CD4-positive, alpha-beta memory T cell (primary cell): ENCODE measurements at regions of chr2 and their contacts with region 1.

Region 1: GRCh38 chr2:177332041-177332991 is 60.3 kb upstream of the AGPS start:
- DNase-seq: peak in 4 of 5 donors; percentile 55 to 62 (median 60)
- H3K4me3 ChIP-seq: no peak overlapping the region
- H3K4me3 Mint-ChIP-seq: no peak overlapping the region
- H3K27ac ChIP-seq: no peak overlapping the region
- H3K27ac Mint-ChIP-seq: peak overlapping the region in 4 of 7 donors; percentile 33 to 78 (median 64)
- H3K4me1 ChIP-seq: peaks cover 10% of the 10 kb centered on the region
- H3K4me1 Mint-ChIP-seq: peaks cover 0 to 13% (median 6%) of the 10 kb centered on the region in 4 donors
- H3K27me3 ChIP-seq: no peaks in the 10 kb centered on the region
- H3K27me3 Mint-ChIP-seq: no peaks in the 10 kb centered on the region

Region 2: GRCh38 chr2:176001916-176002687 is 1330.2 kb before region 1 on chr2 and contains the start of gene LNPK:
- CTCF ChIA-PET with region 1: no interaction called
- POLR2A ChIA-PET with region 1: no interaction called
- intact Hi-C with region 1: loop called (anchors 5 kb)
- DNase-seq: peak; percentile 88 to 95 (median 92)
- H3K4me3 ChIP-seq: peak within 1 kb of the TSS; percentile 76 to 77
- H3K4me3 Mint-ChIP-seq: peak within 1 kb of the TSS; percentile 81 to 94 (median 90)
- H3K27ac ChIP-seq: peak within 1 kb of the TSS; percentile 74
- H3K27ac Mint-ChIP-seq: peak within 1 kb of the TSS; percentile 61 to 98 (median 91)
- H3K4me1 ChIP-seq: peaks cover 16% of the 10 kb centered on the region
- H3K4me1 Mint-ChIP-seq: peaks cover 12 to 33% (median 17%) of the 10 kb centered on the region in 4 donors
- H3K27me3 ChIP-seq: no peaks in the 10 kb centered on the region
- H3K27me3 Mint-ChIP-seq: no peaks in the 10 kb centered on the region
- total RNA-seq, gene LNPK: 30.4 to 31.3 TPM

Region 3: DNA sequence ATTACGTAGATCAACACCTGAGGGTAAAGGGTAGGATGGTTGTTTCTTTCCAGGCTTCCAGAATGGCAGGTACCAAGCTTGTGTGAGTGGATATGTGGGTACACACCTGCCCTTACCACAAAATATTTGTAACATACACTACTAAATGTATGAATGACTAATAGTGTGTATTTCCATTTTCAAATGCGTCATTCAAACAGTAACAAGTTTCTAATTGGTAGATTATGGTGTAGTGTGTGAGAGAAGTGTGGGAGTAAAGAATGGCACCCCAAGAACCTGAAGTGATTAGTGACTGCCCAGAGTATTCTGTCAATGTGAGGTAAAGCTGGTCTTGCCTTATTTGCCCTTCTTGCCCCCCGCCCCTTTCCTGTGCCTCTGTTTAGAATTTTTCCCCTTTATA is 81.4 kb after region 1 on chr2:
- CTCF ChIA-PET with region 1: interaction called, 87 read pairs
- POLR2A ChIA-PET with region 1: no interaction called
- intact Hi-C with region 1: loop called (anchors 1 kb)
- DNase-seq: no peak
- H3K4me3 ChIP-seq: no peak overlapping the region
- H3K4me3 Mint-ChIP-seq: no peak overlapping the region
- H3K27ac ChIP-seq: no peak overlapping the region
- H3K27ac Mint-ChIP-seq: peak overlapping the region in 4 of 7 donors; percentile 32 to 66 (median 50)
- H3K4me1 ChIP-seq: peaks cover 5% of the 10 kb centered on the region
- H3K4me1 Mint-ChIP-seq: peaks cover 26 to 32% (median 27%) of the 10 kb centered on the region in 4 donors
- H3K27me3 ChIP-seq: no peaks in the 10 kb centered on the region
- H3K27me3 Mint-ChIP-seq: no peaks in the 10 kb centered on the region

Region 4: DNA sequence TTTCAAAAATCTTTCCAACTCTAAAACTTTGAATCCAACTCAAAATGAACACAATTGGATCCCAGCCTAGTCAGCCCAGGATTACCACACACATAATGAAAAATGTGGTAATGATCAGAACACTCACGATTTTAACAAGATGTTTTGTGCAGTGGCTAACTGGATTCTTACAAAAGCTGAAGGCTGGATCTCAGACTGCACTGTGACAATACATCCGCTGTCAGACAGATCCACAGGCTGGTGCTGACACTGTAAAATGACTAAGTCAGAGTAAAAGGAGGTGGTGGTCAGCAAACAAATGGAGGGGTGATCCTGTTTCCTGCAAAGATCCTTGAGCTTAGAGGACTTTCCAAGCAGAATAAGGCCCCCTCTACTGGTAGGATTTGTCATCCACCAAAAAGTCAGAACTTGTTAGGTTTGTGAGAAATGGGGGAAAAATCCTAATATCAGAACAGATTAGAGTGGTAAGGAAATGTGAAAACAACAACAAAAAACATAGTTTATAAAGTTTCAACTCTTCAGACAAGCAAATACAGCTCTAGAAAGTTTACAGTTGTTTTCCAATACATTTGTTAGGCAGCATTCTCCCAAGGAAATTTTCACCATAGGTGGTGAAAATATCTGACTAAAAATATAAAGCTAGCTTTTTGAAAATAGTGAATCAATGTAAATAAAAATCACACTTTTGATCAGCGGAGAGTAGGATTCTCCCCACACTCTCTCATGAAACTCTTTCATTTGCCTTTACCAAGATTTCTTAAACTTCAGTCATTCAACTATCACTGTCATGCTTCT is 272.2 kb after region 1 on chr2:
- CTCF ChIA-PET with region 1: interaction called, 9 read pairs
- POLR2A ChIA-PET with region 1: no interaction called
- intact Hi-C with region 1: loop called (anchors 1 kb)
- DNase-seq: peak in 2 of 5 donors; percentile 6 to 8
- H3K4me3 ChIP-seq: no peak overlapping the region
- H3K4me3 Mint-ChIP-seq: no peak overlapping the region
- H3K27ac ChIP-seq: no peak overlapping the region
- H3K27ac Mint-ChIP-seq: peak overlapping the region in 1 of 7 donors; percentile 37
- H3K4me1 ChIP-seq: no peaks in the 10 kb centered on the region
- H3K4me1 Mint-ChIP-seq: no peaks in the 10 kb centered on the region
- H3K27me3 ChIP-seq: no peaks in the 10 kb centered on the region
- H3K27me3 Mint-ChIP-seq: peaks cover 9% of the 10 kb centered on the region in 2 donors

Region 5: GRCh38 chr2:177724398-177725287 is 392.3 kb after region 1 on chr2:
- CTCF ChIA-PET with region 1: interaction called, 20 read pairs
- POLR2A ChIA-PET with region 1: no interaction called
- intact Hi-C with region 1: loop called (anchors 1 kb)
- DNase-seq: peak in 4 of 5 donors; percentile 16 to 28 (median 22)
- H3K4me3 ChIP-seq: no peak overlapping the region
- H3K4me3 Mint-ChIP-seq: no peak overlapping the region
- H3K27ac ChIP-seq: no peak overlapping the region
- H3K27ac Mint-ChIP-seq: no peak overlapping the region
- H3K4me1 ChIP-seq: no peaks in the 10 kb centered on the region
- H3K4me1 Mint-ChIP-seq: no peaks in the 10 kb centered on the region
- H3K27me3 ChIP-seq: no peaks in the 10 kb centered on the region
- H3K27me3 Mint-ChIP-seq: peaks cover 16 to 25% of the 10 kb centered on the region in 2 donors